Dendritic cell treated with granulocyte-macrophage colony-stimulating factor and Interleukin-4, amounts not matched to agents 40 ng/mL and 50 ng/mL, for 4 days (primary cell): ENCODE measurements at regions of chr9 and their contacts with region 1.

Region 1: DNA sequence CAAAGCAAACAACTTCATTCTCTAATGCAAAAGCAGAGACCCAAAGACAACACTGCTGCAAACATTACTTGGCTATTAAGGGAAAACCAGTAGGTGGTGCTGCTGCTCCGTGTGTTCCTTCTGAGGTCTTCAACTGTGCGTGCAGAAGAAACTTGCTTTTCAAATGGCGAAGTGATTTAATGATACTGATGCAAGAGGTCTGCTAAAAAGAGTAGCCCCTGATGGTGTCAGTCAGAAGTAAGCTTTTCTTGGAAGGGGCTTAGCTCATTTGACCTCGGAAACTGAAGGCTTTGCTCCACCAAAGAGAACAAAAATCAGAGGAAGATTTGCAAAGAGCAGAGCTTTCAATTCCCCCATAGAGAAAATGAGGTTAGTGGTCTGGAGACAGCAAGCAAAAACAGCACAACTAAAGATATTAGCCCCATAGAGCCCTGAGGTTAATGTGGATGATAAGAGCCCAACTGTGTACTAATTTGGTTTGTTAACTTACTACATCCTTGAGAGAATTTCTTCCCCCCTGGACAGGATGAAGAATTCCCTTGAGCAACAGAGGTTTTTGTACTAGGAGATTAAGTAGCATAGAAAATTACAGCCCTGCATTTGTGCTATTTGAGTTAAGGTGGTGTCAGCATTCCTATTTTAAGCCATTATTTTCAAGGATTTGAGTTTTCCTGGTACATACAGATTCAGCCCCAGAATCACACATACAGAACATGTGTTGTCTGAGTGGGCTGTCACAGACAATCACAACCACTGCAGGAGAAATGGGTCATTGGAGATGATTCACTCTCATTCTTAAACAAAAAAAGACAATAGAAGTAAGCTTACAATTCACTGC is 153.2 kb upstream of the C9orf72 start:
- H3K4me3 Mint-ChIP-seq: no peak overlapping the region
- H3K27ac Mint-ChIP-seq: peak overlapping the region; percentile 32
- H3K4me1 Mint-ChIP-seq: peaks cover 13% of the 10 kb centered on the region
- H3K27me3 Mint-ChIP-seq: no peaks in the 10 kb centered on the region

Region 2: DNA sequence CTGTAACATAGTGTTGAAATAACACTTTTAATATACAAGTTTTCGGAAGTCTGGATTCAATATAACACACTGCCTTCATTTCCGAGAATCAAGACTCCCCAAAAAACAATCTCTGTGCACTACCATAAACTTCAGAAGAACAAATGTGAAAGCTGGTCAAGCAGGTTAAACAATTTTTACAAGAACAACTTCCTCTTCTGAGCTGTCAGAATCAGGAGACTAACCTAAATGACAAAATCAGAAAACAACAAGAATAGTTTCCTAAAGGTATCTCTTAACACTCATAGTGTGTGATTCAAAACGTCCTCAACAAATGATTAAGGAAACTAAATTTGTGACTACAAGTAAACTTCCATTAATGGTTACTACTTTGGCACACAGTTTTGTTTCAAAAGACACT is 164.8 kb before region 1 on chr9:
- intact Hi-C with region 1: loop called (anchors 5 kb)
- H3K4me3 Mint-ChIP-seq: no peak overlapping the region
- H3K27ac Mint-ChIP-seq: peak overlapping the region; percentile 67
- H3K4me1 Mint-ChIP-seq: peaks cover 11% of the 10 kb centered on the region
- H3K27me3 Mint-ChIP-seq: no peaks in the 10 kb centered on the region

Region 3: DNA sequence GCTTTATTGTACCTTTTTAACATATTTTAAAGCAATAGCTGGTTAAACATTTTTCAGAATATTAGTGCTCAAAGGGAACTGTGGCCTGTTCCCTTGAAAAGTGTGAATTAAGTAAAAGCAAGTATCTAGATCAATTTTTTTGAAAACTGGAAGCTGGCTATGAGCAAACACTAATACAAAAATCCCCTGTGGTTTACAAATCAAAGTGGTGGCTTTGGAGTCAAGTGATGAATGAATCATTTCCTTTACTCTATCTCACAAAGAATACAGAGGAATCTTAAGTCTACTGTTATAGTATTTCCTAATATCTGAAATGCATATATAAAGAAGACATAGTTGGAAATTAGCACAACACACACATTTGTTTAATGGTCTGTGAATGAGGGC is 59.2 kb after region 1 on chr9:
- intact Hi-C with region 1: loop called (anchors 5 kb)
- H3K4me3 Mint-ChIP-seq: no peak overlapping the region
- H3K27ac Mint-ChIP-seq: no peak overlapping the region
- H3K4me1 Mint-ChIP-seq: peaks cover 7% of the 10 kb centered on the region
- H3K27me3 Mint-ChIP-seq: peaks cover 11% of the 10 kb centered on the region

Region 4: DNA sequence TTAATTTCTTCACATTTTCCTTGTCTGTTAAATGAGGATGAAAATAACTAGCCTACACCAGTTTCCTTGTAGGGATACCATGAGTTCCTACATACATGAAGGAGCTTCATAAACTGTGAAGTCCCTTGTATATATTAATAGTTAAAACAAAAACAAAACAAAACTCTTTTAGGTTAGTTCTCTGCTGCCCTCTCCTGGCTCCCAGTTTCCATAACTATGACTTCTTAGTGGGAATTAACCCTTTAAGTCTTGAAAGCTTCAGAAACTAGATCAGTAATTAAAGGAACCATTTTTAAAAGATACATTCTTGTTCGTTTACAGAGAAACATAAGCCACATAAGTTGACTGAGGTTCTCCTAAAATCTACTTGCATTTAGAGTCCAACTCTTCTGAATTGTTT is 346.8 kb after region 1 on chr9:
- intact Hi-C with region 1: loop called (anchors 1 kb)
- H3K4me3 Mint-ChIP-seq: no peak overlapping the region
- H3K27ac Mint-ChIP-seq: no peak overlapping the region
- H3K4me1 Mint-ChIP-seq: no peaks in the 10 kb centered on the region
- H3K27me3 Mint-ChIP-seq: no peaks in the 10 kb centered on the region

Region 5: DNA sequence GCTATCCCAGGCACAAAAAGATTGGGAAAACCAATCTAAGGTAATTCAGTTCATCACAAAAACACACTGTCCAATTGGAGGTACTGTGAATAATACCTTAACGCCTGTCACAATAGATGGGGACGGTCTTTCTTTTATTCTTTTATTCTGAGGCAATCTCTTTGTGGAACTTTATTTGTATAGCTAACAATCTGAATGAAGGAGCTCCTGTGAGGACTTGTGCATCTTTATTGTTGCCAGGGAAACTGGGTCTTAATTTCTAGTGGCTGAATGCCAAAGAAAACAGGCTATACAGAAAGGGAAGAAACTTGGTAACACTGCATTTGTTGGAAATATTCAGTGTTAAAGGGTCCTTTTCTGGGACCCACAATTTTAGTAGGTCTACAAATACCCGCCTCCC is 393.7 kb after region 1 on chr9:
- intact Hi-C with region 1: no loop called
- H3K4me3 Mint-ChIP-seq: no peak overlapping the region
- H3K27ac Mint-ChIP-seq: no peak overlapping the region
- H3K4me1 Mint-ChIP-seq: no peaks in the 10 kb centered on the region
- H3K27me3 Mint-ChIP-seq: no peaks in the 10 kb centered on the region